Mammary epithelial cell (primary cell): ENCODE measurements at regions of chr16 and their contacts with region 1.

Region 1: GRCh38 chr16:22374311-22375116 is at the start of gene CDR2:
- DNase-seq: peak; percentile 96
- H3K4me3 ChIP-seq: peak within 1 kb of the TSS; percentile 72 to 91 (median 84)
- H3K27ac ChIP-seq: peak within 1 kb of the TSS; percentile 89
- H3K4me1 ChIP-seq: peaks cover 38% of the 10 kb centered on the region
- H3K27me3 ChIP-seq: no peaks in the 10 kb centered on the region
- CTCF ChIP-seq: no peak
- total RNA-seq, gene CDR2: 31.3 to 32.3 TPM

Region 2: DNA sequence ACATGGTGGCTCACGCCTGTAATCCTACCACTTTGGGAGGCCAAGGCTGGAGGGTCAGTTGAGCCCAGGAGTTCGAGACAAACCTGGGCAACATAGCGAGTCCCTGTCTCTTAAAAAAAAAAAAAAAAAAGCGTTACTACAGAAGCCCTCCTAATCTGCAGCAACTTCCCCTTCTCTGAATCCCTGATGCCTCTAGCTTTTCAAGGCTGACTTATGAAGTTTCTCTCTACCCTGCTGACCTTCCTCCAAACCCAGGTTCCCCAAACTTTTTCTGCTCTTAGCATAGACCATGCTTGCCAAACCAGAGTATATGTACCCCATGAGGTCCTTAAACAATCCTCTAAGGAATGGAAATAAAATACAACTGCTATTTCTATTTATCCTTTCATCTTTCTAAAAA is 1457.6 kb before region 1 on chr16:
- CTCF ChIA-PET with region 1: interaction called, 14 read pairs
- dilution Hi-C with region 1: no loop called
- in situ Hi-C with region 1: no loop called
- intact Hi-C with region 1: no loop called
- DNase-seq: no peak
- H3K4me3 ChIP-seq: no peak overlapping the region
- H3K27ac ChIP-seq: no peak overlapping the region
- H3K4me1 ChIP-seq: peaks cover 18% of the 10 kb centered on the region
- H3K27me3 ChIP-seq: no peaks in the 10 kb centered on the region
- CTCF ChIP-seq: no peak

Region 3: DNA sequence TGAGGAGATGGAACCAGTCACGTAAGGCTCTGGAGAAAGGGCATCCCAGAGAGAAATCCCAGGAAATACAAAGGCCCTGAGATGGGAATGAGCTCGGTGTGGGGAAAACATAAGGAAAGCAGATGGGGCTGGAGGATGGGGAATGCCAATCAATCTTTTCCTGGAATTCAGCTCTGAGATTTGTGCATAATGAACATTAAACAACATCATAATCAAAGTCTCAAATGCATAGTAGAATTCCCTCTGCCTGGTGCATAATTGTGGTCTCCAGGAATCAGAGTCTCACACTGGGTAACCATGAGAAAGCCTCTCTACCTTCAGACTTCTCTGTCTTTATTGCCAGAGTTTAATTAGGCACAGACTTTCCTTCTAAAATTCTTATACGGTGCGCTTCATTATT is 679.9 kb before region 1 on chr16:
- CTCF ChIA-PET with region 1: no interaction called
- dilution Hi-C with region 1: no loop called
- in situ Hi-C with region 1: no loop called
- intact Hi-C with region 1: no loop called
- DNase-seq: no peak
- H3K4me3 ChIP-seq: no peak overlapping the region
- H3K27ac ChIP-seq: no peak overlapping the region
- H3K4me1 ChIP-seq: no peaks in the 10 kb centered on the region
- H3K27me3 ChIP-seq: no peaks in the 10 kb centered on the region
- CTCF ChIP-seq: no peak

Region 4: GRCh38 chr16:22284637-22285036 is 89.9 kb before region 1 on chr16:
- CTCF ChIA-PET with region 1: no interaction called
- dilution Hi-C with region 1: no loop called
- in situ Hi-C with region 1: no loop called
- intact Hi-C with region 1: no loop called
- DNase-seq: no peak
- H3K4me3 ChIP-seq: no peak overlapping the region
- H3K27ac ChIP-seq: no peak overlapping the region
- H3K4me1 ChIP-seq: no peaks in the 10 kb centered on the region
- H3K27me3 ChIP-seq: no peaks in the 10 kb centered on the region
- CTCF ChIP-seq: no peak

Region 5: GRCh38 chr16:22346483-22346882 is 28.0 kb before region 1 on chr16:
- CTCF ChIA-PET with region 1: no interaction called
- dilution Hi-C with region 1: no loop called
- in situ Hi-C with region 1: no loop called
- intact Hi-C with region 1: loop called (anchors 1 kb)
- DNase-seq: no peak
- H3K4me3 ChIP-seq: no peak overlapping the region
- H3K27ac ChIP-seq: peak overlapping the region; percentile 96
- H3K4me1 ChIP-seq: peaks cover 38% of the 10 kb centered on the region
- H3K27me3 ChIP-seq: no peaks in the 10 kb centered on the region
- CTCF ChIP-seq: no peak

Region 6: DNA sequence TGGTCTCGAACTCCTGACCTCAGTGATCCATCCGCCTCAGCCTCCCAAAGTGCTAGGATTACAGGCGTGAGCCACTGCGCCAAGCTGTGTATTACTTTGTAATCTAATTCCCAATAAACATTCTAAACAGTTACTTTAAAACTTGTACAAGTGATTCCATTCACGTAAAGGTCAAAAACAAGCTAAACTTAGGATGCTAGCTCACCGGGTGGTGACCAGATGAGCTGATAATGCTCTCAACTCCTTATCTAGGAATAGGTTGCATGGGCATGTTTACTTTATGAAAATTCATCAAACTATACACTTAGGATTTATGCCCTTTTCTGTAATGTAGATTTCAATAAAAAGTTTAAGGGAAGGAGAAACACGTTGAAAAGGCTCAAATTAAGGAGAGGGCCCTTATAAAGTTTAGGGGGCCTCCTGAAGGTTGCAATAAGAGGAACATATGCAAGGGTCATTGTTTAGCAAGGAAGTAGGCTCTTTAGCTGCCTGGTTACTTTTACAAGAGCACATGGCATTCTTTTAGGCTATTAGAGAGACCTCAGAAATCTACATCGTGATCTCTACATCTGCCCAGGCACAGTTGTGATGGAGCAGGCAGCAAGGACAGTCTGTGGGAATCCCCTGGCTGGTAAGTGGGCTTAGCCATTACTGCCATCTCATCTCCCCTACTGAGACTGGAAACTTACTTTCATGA is 13.4 kb before region 1 on chr16:
- CTCF ChIA-PET with region 1: no interaction called
- dilution Hi-C with region 1: no loop called
- in situ Hi-C with region 1: no loop called
- intact Hi-C with region 1: no loop called
- DNase-seq: no peak
- H3K4me3 ChIP-seq: no peak overlapping the region
- H3K27ac ChIP-seq: no peak overlapping the region
- H3K4me1 ChIP-seq: no peaks in the 10 kb centered on the region
- H3K27me3 ChIP-seq: no peaks in the 10 kb centered on the region
- CTCF ChIP-seq: no peak

Region 7: DNA sequence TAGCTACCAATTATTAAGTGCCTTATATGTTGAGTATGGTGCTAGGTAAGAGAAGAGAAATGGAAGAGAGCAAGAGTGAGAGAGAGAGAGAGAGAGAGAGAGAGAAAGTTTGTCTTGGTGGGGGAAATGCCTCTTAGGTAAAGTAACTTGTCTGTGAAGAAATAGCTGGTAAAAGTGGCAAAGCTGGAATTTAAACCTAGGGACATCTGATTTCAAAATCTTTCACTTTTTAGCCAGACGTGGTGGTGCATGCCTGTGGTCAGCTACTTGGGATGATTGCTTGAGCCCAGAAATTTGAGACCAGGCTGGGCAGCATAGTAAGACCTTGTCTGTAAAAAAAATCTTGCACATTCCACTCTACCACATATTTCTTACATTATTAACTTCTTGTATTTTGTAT is 22.9 kb after region 1 on chr16:
- CTCF ChIA-PET with region 1: interaction called, 3 read pairs
- dilution Hi-C with region 1: no loop called
- in situ Hi-C with region 1: no loop called
- intact Hi-C with region 1: loop called (anchors 2 kb)
- DNase-seq: peak; percentile 82
- H3K4me3 ChIP-seq: no peak overlapping the region
- H3K27ac ChIP-seq: peak overlapping the region; percentile 12
- H3K4me1 ChIP-seq: peaks cover 27% of the 10 kb centered on the region
- H3K27me3 ChIP-seq: no peaks in the 10 kb centered on the region
- CTCF ChIP-seq: no peak

Region 8: DNA sequence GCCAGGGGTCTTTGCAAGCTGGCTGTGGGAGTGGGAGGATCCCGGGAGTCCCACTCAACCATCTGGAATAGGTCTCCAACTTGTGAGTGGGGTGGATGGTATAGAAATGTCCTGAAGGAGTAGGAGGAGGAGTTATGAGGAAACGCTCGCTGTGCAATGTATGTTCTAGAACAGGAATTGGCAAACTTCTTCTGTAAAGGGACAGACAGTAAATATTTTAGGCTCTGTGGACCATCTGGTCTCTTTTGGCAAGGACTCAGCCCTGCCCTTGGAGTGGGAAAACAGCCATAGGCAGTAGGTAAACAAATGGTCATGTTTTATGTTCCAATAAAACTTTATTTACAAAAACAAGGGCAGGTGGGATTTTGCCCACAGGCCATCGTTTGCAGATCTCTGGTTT is 285.4 kb after region 1 on chr16:
- CTCF ChIA-PET with region 1: no interaction called
- dilution Hi-C with region 1: loop called (anchors 10 kb)
- in situ Hi-C with region 1: no loop called
- intact Hi-C with region 1: no loop called
- DNase-seq: no peak
- H3K4me3 ChIP-seq: no peak overlapping the region
- H3K27ac ChIP-seq: no peak overlapping the region
- H3K4me1 ChIP-seq: peaks cover 10% of the 10 kb centered on the region
- H3K27me3 ChIP-seq: no peaks in the 10 kb centered on the region
- CTCF ChIP-seq: no peak